Sciatic nerve (tissue), 2 donors: ENCODE measurements at regions of chr14 and their contacts with region 1.

Region 1: DNA sequence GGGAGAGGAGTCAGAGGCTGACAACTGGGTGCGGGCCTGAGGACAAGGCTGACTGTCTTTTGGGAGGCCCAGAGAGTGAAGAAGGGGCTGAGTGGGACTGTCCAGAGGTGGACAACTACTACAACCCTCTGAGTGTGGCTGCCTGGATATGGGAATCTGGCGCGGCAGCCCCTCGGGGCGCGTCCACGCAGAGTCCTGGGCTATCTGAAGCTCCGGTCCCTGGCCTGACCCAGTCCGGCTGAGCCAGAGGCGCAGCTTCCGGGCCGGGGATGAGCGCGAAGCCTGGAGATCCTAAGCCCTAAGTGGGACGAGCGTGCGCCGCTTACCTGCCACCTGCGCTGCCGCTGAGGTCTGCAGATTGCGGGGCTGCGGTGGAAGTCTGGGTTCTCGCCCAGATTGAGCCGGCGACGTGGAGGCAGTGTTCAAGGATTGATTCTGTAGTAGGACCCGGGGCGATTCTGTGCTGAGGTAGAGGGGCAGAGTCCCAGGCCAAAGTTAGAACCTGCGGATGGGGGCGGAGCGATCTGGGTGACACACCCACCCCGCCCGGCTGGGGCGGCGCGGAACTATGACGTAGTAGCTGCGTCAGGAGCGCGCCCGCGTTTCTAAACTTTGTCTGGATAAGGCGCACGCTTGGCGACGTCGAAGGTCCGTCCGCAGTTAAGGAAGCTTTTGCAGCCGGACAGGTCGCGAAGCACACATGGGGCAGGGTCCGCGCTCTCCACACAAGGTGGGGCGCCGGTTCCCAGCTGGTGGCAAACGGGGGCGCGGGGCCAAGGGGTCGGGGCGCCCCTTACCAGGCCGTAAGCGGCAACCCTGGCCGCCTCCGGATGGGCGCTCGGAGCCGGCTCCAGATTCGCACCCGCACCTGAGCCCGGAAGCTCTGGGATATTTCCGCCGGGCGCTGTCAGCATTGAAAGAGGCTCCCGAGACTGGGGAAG is at the starts of genes DHRS1 and NOP9:
- DNase-seq: peak; percentile 96
- ATAC-seq: peak; percentile 96
- total RNA-seq, gene DHRS1: 27.7 TPM
- total RNA-seq, gene NOP9: 21.4 TPM

Region 2: GRCh38 chr14:24241829-24242443 is 57.6 kb before region 1 on chr14:
- intact Hi-C with region 1: loop called (anchors 5 kb)
- DNase-seq: peak; percentile 96
- ATAC-seq: peak; percentile 96